ENCODE measurements at regions of chr7 and their contacts with region 1.

Region 1: GRCh38 chr7:154927624-154928143 is 75.2 kb downstream of the PAXIP1 start:
- DNase-seq: peak; percentile 83
- ATAC-seq: peak; percentile 48
- H3K4me3 ChIP-seq: peak overlapping the region; percentile 76
- H3K27ac ChIP-seq: no peak overlapping the region
- H3K4me1 ChIP-seq: peaks cover 6% of the 10 kb centered on the region
- H3K27me3 ChIP-seq: peaks cover 8% of the 10 kb centered on the region; the same call in 1 of the 2 replicates
- CTCF ChIP-seq: peak; percentile 83

Region 2: GRCh38 chr7:154953006-154953684 is 25.5 kb after region 1 on chr7:
- CTCF ChIA-PET with region 1: interaction called, 9 read pairs
- POLR2A ChIA-PET with region 1: no interaction called
- intact Hi-C with region 1: loop called (anchors 1 kb)
- DNase-seq: peak; percentile 53
- ATAC-seq: peak; percentile 49
- H3K4me3 ChIP-seq: no peak overlapping the region
- H3K27ac ChIP-seq: no peak overlapping the region
- H3K4me1 ChIP-seq: no peaks in the 10 kb centered on the region
- H3K27me3 ChIP-seq: no peaks in the 10 kb centered on the region
- CTCF ChIP-seq: peak; percentile 79

Region 3: DNA sequence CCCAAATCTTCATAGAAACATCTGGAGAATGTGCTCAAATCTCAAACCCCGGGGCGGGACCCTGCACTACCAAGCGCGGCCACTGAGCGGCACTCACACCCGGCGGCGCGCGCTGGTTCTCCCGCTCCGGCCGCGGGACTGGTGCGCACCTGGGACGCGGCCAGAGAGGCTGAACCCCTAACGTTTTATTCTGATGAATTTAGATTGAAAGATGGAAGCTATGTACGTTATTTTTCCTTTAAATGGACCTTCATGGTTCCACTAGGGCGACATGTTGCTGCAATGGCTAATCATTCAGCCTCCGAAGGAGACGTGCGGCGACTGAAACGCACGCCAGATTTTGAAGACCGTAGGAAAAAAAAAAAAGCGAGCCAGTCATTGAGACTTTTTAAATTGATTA is 263.0 kb after region 1 on chr7:
- CTCF ChIA-PET with region 1: no interaction called
- POLR2A ChIA-PET with region 1: no interaction called
- intact Hi-C with region 1: loop called (anchors 1 kb)
- DNase-seq: peak; percentile 39
- ATAC-seq: peak; percentile 57
- H3K4me3 ChIP-seq: peak overlapping the region; percentile 12; the same call in 1 of the 2 replicates
- H3K27ac ChIP-seq: no peak overlapping the region
- H3K4me1 ChIP-seq: peaks cover 18% of the 10 kb centered on the region
- H3K27me3 ChIP-seq: no peaks in the 10 kb centered on the region
- CTCF ChIP-seq: peak; percentile 84

Region 4: GRCh38 chr7:155252444-155252887 is 324.8 kb after region 1 on chr7:
- CTCF ChIA-PET with region 1: interaction called, 3 read pairs
- POLR2A ChIA-PET with region 1: no interaction called
- intact Hi-C with region 1: loop called (anchors 1 kb)
- DNase-seq: peak; percentile 29
- ATAC-seq: peak; percentile 50
- H3K4me3 ChIP-seq: no peak overlapping the region
- H3K27ac ChIP-seq: no peak overlapping the region
- H3K4me1 ChIP-seq: peaks cover 11% of the 10 kb centered on the region; the same call in 1 of the 2 replicates
- H3K27me3 ChIP-seq: no peaks in the 10 kb centered on the region
- CTCF ChIP-seq: peak; percentile 47; the same call in 1 of the 2 replicates

Region 5: DNA sequence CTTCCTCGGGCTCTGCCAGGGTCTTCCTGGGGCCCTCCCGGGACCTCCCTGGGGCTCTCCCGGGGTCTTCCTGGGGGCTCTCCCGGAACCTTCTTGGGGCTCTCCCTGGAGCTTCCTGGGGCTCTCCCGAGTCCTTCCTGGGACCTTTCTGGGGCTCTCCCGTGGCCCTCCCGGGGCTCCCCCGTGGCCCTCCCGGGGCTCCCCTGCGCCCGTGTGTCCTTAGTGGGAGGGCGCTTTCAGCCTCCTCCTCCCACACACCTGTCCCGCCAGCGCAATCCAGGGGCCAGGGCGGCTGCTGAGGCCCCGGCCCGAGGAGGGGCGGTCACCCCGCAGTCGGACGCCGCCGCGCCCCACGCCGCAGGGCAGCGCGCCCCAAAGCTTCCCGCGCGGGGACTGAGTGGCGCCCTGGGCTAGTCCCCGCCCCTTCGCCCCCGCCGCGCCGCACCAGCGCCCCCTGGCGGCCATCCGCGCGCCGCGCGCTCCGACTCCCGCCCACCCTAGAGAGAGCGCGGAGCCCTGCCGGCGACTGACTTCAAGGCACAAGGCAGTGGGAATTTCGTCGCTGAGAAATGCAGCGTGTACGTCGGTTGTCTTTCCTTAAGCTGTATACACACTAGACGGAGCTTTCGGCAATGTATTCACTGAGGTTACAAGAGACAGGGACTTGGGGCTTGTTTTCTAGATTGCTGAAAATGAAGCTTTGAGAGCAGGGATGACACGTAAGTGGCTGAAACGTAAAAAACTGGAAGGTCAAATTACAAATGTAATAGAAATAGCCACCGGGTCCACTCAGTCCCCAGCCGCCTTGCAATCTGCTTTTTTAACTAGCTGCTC is 417.1 kb after region 1 on chr7:
- CTCF ChIA-PET with region 1: interaction called, 4 read pairs
- POLR2A ChIA-PET with region 1: no interaction called
- intact Hi-C with region 1: loop called (anchors 1 kb)
- DNase-seq: peak; percentile 72
- ATAC-seq: peak; percentile 95
- H3K4me3 ChIP-seq: peak overlapping the region; percentile 64
- H3K27ac ChIP-seq: no peak overlapping the region
- H3K4me1 ChIP-seq: no peaks in the 10 kb centered on the region; the same call in 1 of the 2 replicates
- H3K27me3 ChIP-seq: peaks cover 12% of the 10 kb centered on the region; the same call in 1 of the 2 replicates
- CTCF ChIP-seq: peak; percentile 73

Region 6: GRCh38 chr7:155456738-155457564 is 529.3 kb after region 1 on chr7:
- CTCF ChIA-PET with region 1: no interaction called
- POLR2A ChIA-PET with region 1: no interaction called
- intact Hi-C with region 1: loop called (anchors 5 kb)
- DNase-seq: peak; percentile 81
- ATAC-seq: peak; percentile 78
- H3K4me3 ChIP-seq: peak overlapping the region; percentile 70
- H3K27ac ChIP-seq: no peak overlapping the region
- H3K4me1 ChIP-seq: peaks cover 8% of the 10 kb centered on the region; the same call in 1 of the 2 replicates
- H3K27me3 ChIP-seq: peaks cover 43% of the 10 kb centered on the region
- CTCF ChIP-seq: no peak

Region 7: DNA sequence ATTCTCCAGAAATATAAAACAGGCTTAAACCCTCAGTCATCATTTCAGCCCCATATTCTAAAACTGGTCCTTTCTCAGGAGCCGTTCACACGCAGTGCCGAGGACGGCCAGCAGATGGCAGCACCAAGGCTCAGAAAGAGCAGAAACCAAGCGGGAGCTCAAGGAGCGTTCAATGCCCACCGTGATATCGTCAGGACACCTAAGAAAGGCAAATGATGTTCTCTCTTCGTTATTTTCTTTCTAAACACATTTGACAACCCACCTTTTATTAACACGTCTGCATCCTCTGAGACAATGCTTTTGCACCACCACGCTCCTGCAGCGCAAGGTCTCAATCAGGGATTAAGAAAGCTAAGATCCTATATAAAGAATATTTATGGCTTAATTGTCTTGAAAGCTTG is 671.1 kb after region 1 on chr7:
- CTCF ChIA-PET with region 1: no interaction called
- POLR2A ChIA-PET with region 1: no interaction called
- intact Hi-C with region 1: loop called (anchors 10 kb)
- DNase-seq: peak; percentile 87
- ATAC-seq: peak; percentile 74
- H3K4me3 ChIP-seq: no peak overlapping the region
- H3K27ac ChIP-seq: no peak overlapping the region
- H3K4me1 ChIP-seq: no peaks in the 10 kb centered on the region
- H3K27me3 ChIP-seq: peaks cover 39% of the 10 kb centered on the region
- CTCF ChIP-seq: peak; percentile 95

Measured in PC-3 (cell line).